A549 (cell line): ENCODE measurements at regions of chr10 and their contacts with region 1.

Region 1: GRCh38 chr10:15251791-15252380 is 83.4 kb upstream of the NMT2 start:
- DNase-seq: no peak
- ATAC-seq: no peak
- H3K4me3 ChIP-seq: no peak overlapping the region
- H3K27ac ChIP-seq: no peak overlapping the region
- H3K4me1 ChIP-seq: no peaks in the 10 kb centered on the region
- CTCF ChIP-seq: no peak
- EP300 ChIP-seq: no peak
- POLR2A ChIP-seq: no peak
- RAD21 ChIP-seq: no peak

Region 2: GRCh38 chr10:15209827-15210509 is 41.9 kb before region 1 on chr10:
- CTCF ChIA-PET with region 1: interaction called, 12 read pairs
- POLR2A ChIA-PET with region 1: no interaction called
- DNase-seq: peak; percentile 78 to 80
- ATAC-seq: peak; percentile 95 to 98
- H3K4me3 ChIP-seq: no peak overlapping the region
- H3K27ac ChIP-seq: peak overlapping the region in 1 of 2 experiments; percentile 24; a peak in 1 of 6 replicates
- H3K4me1 ChIP-seq: peaks cover 8% of the 10 kb centered on the region; the same call in 2 of the 3 replicates
- CTCF ChIP-seq: peak; percentile 87
- EP300 ChIP-seq: no peak
- POLR2A ChIP-seq: no peak
- RAD21 ChIP-seq: peak; percentile 69 to 73